ENCODE measurements at regions of chr7 and their contacts with region 1.

Region 1: DNA sequence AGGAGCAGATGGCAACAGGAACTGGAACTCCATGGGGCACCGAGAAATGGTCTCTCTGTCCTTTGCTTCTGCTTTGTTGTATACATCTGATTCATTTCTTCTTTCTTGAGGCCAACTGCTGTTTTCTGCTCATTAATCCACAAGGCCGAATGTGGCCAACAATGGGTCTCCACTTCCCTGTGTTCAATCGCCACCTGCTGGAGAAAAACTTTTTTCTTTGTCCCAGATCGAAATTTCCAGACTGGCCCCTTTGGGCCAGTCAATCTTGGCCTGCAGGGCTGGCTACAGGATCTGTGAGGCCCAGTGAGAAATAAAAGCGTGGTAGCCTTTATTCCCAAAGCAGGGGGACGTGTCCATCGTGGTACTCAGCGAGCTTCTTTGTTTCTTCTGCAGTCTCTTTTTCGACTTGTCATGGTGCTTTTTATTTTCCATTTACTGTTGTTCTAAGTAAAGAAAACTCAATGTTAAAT is 58.8 kb downstream of the PARP12 start:
- DNase-seq: no peak
- H3K4me3 ChIP-seq: no peak overlapping the region
- H3K27ac ChIP-seq: no peak overlapping the region
- H3K4me1 ChIP-seq: no peaks in the 10 kb centered on the region
- H3K27me3 ChIP-seq: no peaks in the 10 kb centered on the region
- CTCF ChIP-seq: peak in 1 of 4 experiments; percentile 35
- EP300 ChIP-seq: no peak
- POLR2A ChIP-seq: no peak

Region 2: DNA sequence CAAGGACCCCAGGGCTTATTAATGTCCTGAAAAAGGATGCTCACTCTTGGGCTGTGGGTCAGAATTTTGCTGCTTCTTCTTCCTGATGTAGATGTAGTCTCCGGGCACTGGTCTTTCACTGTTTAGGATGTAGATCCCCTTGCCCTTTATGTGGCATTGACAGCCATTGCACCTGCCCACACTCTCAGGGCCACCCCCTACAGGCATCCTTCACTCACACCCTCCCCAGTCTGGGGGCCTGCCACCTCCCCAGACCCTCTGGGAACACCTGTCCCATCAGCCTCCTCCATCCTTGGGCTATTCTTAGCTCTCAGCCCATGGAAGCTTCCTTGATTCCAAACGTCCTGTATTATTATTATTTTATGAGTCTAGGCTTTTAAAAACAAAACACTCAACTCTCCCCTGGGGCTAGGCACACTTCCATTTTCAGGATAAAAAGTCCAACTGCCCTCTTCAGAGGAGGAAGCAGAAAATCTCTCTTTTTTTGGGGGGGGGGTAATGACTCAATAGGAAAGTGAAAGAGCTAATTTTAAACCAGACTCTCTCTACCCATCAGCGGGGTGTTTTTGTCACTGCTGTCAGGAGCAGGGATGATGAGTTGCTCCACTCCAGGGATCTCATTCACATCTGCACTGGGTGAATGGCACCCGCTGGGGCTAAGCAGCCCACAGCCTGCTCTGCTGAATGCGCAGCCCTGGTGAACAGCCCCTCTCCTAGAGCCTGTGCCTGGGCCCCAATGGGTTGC is 508.9 kb before region 1 on chr7:
- intact Hi-C with region 1: loop called (anchors 2 kb)
- DNase-seq: no peak
- H3K4me3 ChIP-seq: no peak overlapping the region
- H3K27ac ChIP-seq: no peak overlapping the region
- H3K4me1 ChIP-seq: peaks cover 0 to 4% (median 2%) of the 10 kb centered on the region in 4 donors
- H3K27me3 ChIP-seq: no peaks in the 10 kb centered on the region
- CTCF ChIP-seq: no peak
- EP300 ChIP-seq: no peak
- POLR2A ChIP-seq: no peak

Region 3: DNA sequence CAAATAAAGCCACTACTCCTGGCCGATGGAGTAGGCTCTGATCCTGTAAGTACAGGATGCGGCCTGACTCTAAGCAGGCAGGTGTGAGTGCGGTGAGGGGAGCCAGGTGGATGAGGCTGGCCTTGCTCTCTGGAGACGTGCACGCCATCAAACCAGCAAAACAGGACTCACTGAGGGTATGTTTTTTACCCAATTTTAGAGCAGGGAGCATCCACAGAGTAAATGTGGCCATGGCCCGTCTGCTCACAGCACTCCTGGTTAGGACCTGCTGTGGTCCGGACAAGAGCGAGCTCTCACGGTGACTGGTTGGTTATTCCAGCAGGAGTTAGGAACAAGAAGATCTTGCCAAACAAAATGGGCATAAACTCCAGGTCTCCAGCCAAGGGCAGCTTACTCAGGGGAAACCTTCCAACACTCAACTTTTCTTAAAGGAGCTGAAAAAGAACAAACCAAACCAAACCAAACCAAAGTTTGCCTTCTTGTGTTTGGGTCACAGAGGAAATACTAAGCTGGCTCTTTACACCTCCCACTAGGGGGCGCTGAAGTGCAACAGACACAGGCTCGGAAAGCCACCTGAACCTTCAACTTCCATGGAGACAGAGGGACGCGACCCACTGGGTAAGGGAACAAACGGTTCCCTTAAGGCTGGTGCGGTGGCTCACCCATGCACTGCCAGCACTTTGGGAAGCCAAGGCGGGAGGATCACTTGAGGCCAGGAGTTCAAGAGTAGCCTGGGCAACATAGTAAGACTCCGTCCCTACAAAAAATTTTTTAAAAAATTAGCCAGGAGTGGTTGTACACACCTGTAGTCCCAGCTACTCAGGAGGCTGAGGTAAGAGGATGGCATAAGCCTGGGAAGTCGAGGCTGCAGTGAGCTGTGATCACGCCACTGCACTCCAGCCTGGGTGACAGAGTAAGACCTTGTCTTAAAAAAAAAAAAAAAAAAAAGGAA is 358.1 kb before region 1 on chr7:
- intact Hi-C with region 1: loop called (anchors 1 kb)
- DNase-seq: peak; percentile 86
- H3K4me3 ChIP-seq: no peak overlapping the region
- H3K27ac ChIP-seq: no peak overlapping the region
- H3K4me1 ChIP-seq: peaks cover 0 to 5% (median 0%) of the 10 kb centered on the region in 4 donors
- H3K27me3 ChIP-seq: no peaks in the 10 kb centered on the region
- CTCF ChIP-seq: peak; percentile 67 to 89 (median 80)
- EP300 ChIP-seq: no peak
- POLR2A ChIP-seq: no peak